ENCODE measurements at regions of chrX and their contacts with region 1.

Region 1: GRCh38 chrX:46758906-46759644 is at the start of gene SLC9A7:
- DNase-seq: peak; percentile 88
- ATAC-seq: peak; percentile 71
- H3K4me3 ChIP-seq: peak within 1 kb of the TSS; percentile 52 to 73 (median 68)
- H3K4me3 Mint-ChIP-seq: peak within 1 kb of the TSS; percentile 97
- H3K27ac ChIP-seq: peak within 1 kb of the TSS; percentile 74 to 88
- H3K27ac Mint-ChIP-seq: peak within 1 kb of the TSS; percentile 96
- H3K4me1 ChIP-seq: peaks cover 23 to 32% of the 10 kb centered on the region in 2 donors
- H3K4me1 Mint-ChIP-seq: peaks cover 38% of the 10 kb centered on the region
- H3K27me3 ChIP-seq: no peaks in the 10 kb centered on the region
- H3K27me3 Mint-ChIP-seq: no peaks in the 10 kb centered on the region
- CTCF ChIP-seq: peak; percentile 68
- total RNA-seq, gene SLC9A7: 51.1 and 53.2 TPM in 2 replicates

Region 2: DNA sequence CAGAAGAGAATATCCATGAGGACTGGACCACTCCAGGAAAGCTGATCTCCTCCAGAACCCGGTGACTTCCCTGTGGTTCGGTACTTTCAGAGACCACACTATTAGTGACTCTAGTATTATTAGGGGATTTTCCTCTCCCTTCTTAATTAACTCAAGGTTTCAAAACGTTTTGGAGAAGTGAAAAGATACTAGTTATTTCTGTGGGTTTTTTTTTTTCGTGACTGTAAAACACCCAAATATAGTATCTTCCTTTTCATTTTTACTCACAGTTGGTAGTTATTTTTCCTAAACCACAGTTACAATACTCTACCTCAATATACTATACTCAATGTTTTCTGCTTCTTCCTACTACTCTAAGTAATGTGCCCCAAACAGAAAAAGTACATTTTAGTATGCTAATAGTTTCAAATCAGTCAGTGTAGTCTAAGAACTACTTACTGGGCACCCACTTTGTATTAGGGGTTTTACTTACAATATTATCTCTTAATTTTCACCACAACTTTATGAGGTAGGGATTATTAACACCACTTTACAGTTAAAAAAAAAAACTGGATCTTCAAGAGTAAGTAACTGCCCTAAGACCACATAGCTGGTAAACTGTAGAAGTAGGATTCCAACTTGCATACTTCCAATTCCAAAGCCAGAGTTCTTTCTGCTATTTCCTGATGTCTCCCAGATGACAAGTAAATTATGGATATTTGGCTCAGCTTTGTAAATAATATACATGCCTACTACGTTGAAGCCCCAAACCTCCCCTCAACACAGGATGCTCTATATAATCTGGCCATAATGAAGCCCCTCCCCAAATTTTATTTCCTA is 45.2 kb before region 1 on chrX:
- CTCF ChIA-PET with region 1: no interaction called
- POLR2A ChIA-PET with region 1: no interaction called
- intact Hi-C with region 1: loop called (anchors 2 kb)
- DNase-seq: peak; percentile 57
- ATAC-seq: peak; percentile 46
- H3K4me3 ChIP-seq: peak overlapping the region in 2 of 5 experiments; percentile 7 to 10
- H3K4me3 Mint-ChIP-seq: peak overlapping the region; percentile 73
- H3K27ac ChIP-seq: peak overlapping the region; percentile 63 to 74
- H3K27ac Mint-ChIP-seq: peak overlapping the region; percentile 85
- H3K4me1 ChIP-seq: peaks cover 68 to 73% of the 10 kb centered on the region in 2 donors
- H3K4me1 Mint-ChIP-seq: peaks cover 80% of the 10 kb centered on the region
- H3K27me3 ChIP-seq: no peaks in the 10 kb centered on the region
- H3K27me3 Mint-ChIP-seq: no peaks in the 10 kb centered on the region
- CTCF ChIP-seq: no peak

Region 3: GRCh38 chrX:46796574-46797191 is 37.6 kb after region 1 on chrX:
- CTCF ChIA-PET with region 1: interaction called, 25 read pairs
- POLR2A ChIA-PET with region 1: interaction called, 3 read pairs
- intact Hi-C with region 1: loop called (anchors 1 kb)
- DNase-seq: peak; percentile 77
- ATAC-seq: no peak
- H3K4me3 ChIP-seq: no peak overlapping the region
- H3K4me3 Mint-ChIP-seq: no peak overlapping the region
- H3K27ac ChIP-seq: no peak overlapping the region
- H3K27ac Mint-ChIP-seq: no peak overlapping the region
- H3K4me1 ChIP-seq: peaks cover 0 to 8% of the 10 kb centered on the region in 2 donors
- H3K4me1 Mint-ChIP-seq: peaks cover 15% of the 10 kb centered on the region
- H3K27me3 ChIP-seq: no peaks in the 10 kb centered on the region
- H3K27me3 Mint-ChIP-seq: no peaks in the 10 kb centered on the region
- CTCF ChIP-seq: peak; percentile 73

Region 4: GRCh38 chrX:46836701-46837557 is 77.9 kb after region 1 on chrX and contains the start of gene RP2:
- CTCF ChIA-PET with region 1: no interaction called
- POLR2A ChIA-PET with region 1: interaction called, 4 read pairs
- intact Hi-C with region 1: loop called (anchors 2 kb)
- DNase-seq: peak; percentile 91
- ATAC-seq: peak; percentile 94
- H3K4me3 ChIP-seq: peak within 1 kb of the TSS; percentile 82 to 93 (median 83)
- H3K4me3 Mint-ChIP-seq: peak within 1 kb of the TSS; percentile 98
- H3K27ac ChIP-seq: peak within 1 kb of the TSS; percentile 75 to 87
- H3K27ac Mint-ChIP-seq: peak within 1 kb of the TSS; percentile 97
- H3K4me1 ChIP-seq: peaks cover 22 to 26% of the 10 kb centered on the region in 2 donors
- H3K4me1 Mint-ChIP-seq: peaks cover 30% of the 10 kb centered on the region
- H3K27me3 ChIP-seq: no peaks in the 10 kb centered on the region
- H3K27me3 Mint-ChIP-seq: no peaks in the 10 kb centered on the region
- CTCF ChIP-seq: no peak
- total RNA-seq, gene RP2: 14.5 and 14.9 TPM in 2 replicates

Region 5: GRCh38 chrX:46978341-46979291 is 219.5 kb after region 1 on chrX:
- CTCF ChIA-PET with region 1: no interaction called
- POLR2A ChIA-PET with region 1: no interaction called
- intact Hi-C with region 1: loop called (anchors 1 kb)
- DNase-seq: peak; percentile 82
- ATAC-seq: peak; percentile 84
- H3K4me3 ChIP-seq: no peak overlapping the region
- H3K4me3 Mint-ChIP-seq: no peak overlapping the region
- H3K27ac ChIP-seq: no peak overlapping the region
- H3K27ac Mint-ChIP-seq: peak overlapping the region; percentile 1
- H3K4me1 ChIP-seq: peaks cover 9 to 15% of the 10 kb centered on the region in 2 donors
- H3K4me1 Mint-ChIP-seq: peaks cover 26% of the 10 kb centered on the region
- H3K27me3 ChIP-seq: no peaks in the 10 kb centered on the region
- H3K27me3 Mint-ChIP-seq: no peaks in the 10 kb centered on the region
- CTCF ChIP-seq: peak; percentile 67

Region 6: DNA sequence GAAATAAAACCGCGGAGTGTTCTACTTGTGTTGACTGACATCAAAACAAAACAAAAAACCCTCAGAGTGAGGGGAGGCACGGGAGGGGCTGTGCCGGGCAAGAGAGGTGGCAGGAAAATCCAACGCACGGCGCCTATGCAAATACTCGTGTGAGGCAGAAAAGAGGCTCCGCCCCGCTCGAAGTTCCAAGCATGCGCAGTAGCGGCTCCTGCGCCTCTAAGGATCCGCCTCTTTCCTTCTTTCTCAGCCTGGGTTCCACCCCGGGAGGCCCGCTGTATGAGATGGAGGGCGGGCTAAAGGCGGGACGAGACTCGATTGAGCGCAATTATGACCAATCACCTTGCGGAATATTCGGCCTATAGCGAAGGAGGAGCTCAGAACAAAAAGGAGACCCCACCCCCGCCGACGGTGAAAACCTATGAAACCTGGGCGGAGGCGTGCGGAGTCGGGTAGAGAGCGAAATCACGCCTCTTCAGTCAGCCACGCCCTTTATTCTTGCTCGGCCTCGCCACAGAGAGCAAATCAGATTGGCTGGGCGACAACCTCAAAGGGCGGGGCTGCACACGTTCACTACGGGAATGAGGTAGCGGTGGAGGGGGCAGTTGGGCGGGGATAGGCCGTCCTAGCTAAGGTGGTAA is 458.7 kb after region 1 on chrX:
- CTCF ChIA-PET with region 1: no interaction called
- POLR2A ChIA-PET with region 1: no interaction called
- intact Hi-C with region 1: loop called (anchors 5 kb)
- DNase-seq: peak; percentile 96
- ATAC-seq: peak; percentile 80
- H3K4me3 ChIP-seq: peak overlapping the region; percentile 69 to 83 (median 80)
- H3K4me3 Mint-ChIP-seq: peak overlapping the region; percentile 96
- H3K27ac ChIP-seq: peak overlapping the region; percentile 94 to 99
- H3K27ac Mint-ChIP-seq: peak overlapping the region; percentile 100
- H3K4me1 ChIP-seq: peaks cover 26 to 27% of the 10 kb centered on the region in 2 donors
- H3K4me1 Mint-ChIP-seq: peaks cover 39% of the 10 kb centered on the region
- H3K27me3 ChIP-seq: no peaks in the 10 kb centered on the region
- H3K27me3 Mint-ChIP-seq: no peaks in the 10 kb centered on the region
- CTCF ChIP-seq: no peak

Measured in B cell (primary cell).